AG04450 (cell line): ENCODE measurements at regions of chr11 and their contacts with region 1.

Region 1: GRCh38 chr11:859509-860131 is 17.0 kb downstream of the TSPAN4 start:
- DNase-seq: peak; percentile 75
- H3K4me3 ChIP-seq: peak overlapping the region; percentile 47
- H3K27ac ChIP-seq: peak overlapping the region; percentile 31
- H3K27me3 ChIP-seq: no peaks in the 10 kb centered on the region
- CTCF ChIP-seq: no peak

Region 2: DNA sequence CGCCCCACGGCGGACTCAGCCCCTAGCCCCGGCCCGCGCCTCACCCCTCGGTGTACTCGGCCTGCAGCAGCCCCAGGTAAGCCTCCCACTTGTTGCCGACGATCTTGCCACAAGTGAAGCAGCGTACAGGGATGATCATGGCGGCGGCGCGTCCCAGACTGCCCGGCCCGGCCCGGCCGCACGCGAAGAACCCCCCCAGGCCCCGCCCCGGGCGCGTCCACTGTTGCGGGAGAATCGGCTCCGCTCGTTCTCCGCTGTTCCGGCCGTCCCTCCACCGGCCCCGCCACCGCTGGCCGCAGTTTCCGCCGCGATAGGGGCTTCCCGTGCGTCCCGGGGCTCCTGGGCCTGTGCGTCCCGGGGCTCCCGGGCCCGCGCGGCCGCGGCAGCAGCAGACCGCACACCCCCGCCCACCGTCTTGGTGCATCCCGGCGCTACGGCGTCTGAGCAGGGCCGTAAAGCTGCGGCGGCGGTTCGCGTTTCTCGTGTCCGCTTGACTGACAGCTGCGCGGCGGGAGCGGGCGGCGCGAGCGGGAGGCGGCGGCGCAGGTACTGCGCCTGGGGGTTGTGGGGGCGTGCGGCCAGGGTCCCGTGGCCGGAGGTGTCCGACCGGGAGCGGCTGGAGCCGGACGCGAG is 17.1 kb before region 1 on chr11 and contains the starts of genes POLR2L and TSPAN4:
- CTCF ChIA-PET with region 1: interaction called, 8 read pairs
- POLR2A ChIA-PET with region 1: interaction called, 15 read pairs
- DNase-seq: peak; percentile 68
- H3K4me3 ChIP-seq: peak within 1 kb of the TSS; percentile 71
- H3K27ac ChIP-seq: peak within 1 kb of the TSS; percentile 97
- H3K27me3 ChIP-seq: no peaks in the 10 kb centered on the region
- CTCF ChIP-seq: no peak
- polyA plus RNA-seq, gene POLR2L: 211 and 431 TPM in 2 replicates
- polyA plus RNA-seq, gene TSPAN4: 92.6 and 134 TPM in 2 replicates